ENCODE measurements at regions of chr6 and their contacts with region 1.

Region 1: DNA sequence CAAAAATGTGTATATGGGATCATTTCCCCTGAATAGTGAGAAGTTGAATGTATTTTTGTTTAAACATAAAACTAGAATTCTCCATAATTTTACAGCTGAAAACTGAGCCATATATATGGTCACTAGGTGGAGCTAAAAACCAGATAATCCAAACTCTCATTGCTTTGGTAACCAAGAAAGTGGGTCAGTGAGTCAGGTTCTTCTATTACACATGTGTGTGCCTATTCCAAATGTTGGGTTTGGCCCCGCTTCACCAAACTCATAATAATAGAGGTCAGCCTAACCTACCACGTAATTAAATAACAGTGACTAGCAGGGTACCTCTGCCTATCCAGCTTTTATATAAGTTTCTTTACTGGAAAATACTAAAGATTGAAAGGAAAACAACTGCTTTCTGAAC is 19.3 kb upstream of the RNGTT start:
- DNase-seq: no peak
- ATAC-seq: peak; percentile 80
- H3K4me3 Mint-ChIP-seq: no peak overlapping the region
- H3K27ac Mint-ChIP-seq: no peak overlapping the region
- H3K4me1 Mint-ChIP-seq: no peaks in the 10 kb centered on the region
- H3K27me3 Mint-ChIP-seq: peaks cover 3% of the 10 kb centered on the region

Region 2: DNA sequence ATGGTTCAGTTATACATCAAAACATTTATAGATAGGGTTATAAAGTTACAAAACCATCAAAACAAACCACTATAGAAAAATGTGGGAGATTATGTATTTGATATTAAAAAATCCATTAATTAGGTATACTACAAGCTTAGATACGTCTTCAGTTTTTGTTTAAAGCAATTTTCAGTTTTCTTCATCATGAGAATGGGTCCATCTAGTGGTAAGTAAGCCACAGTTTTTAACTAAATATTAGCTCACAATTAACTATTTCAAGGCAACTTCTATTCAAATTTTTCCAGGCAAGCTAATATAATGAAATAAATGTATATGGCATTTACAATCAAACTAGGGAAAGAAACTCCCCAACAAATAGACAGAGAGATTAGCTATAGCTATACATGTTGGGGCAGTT is 63.7 kb before region 1 on chr6:
- CTCF ChIA-PET with region 1: no interaction called
- DNase-seq: no peak
- ATAC-seq: no peak
- H3K4me3 Mint-ChIP-seq: no peak overlapping the region
- H3K27ac Mint-ChIP-seq: no peak overlapping the region
- H3K4me1 Mint-ChIP-seq: peaks cover 8% of the 10 kb centered on the region
- H3K27me3 Mint-ChIP-seq: no peaks in the 10 kb centered on the region

Region 3: DNA sequence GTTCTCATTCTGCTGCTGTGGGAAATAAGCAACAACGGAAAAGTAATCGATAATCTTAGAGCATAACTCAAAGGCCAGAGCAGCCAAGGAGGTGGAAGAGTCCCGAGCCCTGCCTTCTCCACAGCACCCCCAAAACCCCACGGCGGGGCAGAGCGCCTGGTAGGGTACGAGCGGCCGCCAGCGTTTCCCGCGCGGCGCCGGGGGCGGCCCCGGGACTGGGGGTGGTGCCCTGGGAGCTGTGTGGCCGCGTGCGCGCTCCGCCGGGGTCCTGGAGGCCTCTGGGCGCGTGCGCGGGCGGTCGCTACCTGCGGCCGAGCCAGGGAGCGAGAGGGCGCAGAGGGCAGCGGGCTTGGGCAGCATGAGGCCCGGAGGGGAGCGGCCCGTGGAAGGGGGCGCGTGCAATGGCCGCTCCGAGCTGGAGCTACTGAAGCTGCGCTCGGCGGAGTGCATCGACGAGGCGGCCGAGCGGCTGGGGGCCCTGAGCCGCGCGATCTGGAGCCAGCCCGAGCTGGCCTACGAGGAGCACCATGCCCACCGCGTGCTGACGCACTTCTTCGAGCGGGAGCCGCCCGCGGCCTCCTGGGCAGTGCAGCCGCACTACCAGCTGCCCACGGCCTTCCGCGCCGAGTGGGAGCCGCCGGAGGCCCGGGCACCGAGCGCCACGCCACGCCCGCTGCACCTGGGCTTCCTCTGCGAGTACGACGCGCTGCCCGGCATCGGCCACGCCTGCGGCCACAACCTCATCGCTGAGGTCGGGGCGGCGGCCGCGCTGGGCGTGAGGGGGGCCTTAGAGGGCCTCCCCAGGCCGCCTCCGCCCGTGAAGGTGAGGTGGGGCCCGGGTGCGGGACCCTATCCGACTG is 163.3 kb after region 1 on chr6 and contains the start of gene PM20D2:
- CTCF ChIA-PET with region 1: interaction called, 23 read pairs
- DNase-seq: peak; percentile 78
- ATAC-seq: peak; percentile 85
- H3K4me3 Mint-ChIP-seq: peak within 1 kb of the TSS; percentile 84
- H3K27ac Mint-ChIP-seq: peak within 1 kb of the TSS; percentile 97
- H3K4me1 Mint-ChIP-seq: peaks cover 37% of the 10 kb centered on the region
- H3K27me3 Mint-ChIP-seq: peaks cover 10% of the 10 kb centered on the region
- total RNA-seq, gene PM20D2: 13.1 to 16.6 TPM

Region 4: GRCh38 chr6:89161326-89162046 is 178.8 kb after region 1 on chr6:
- CTCF ChIA-PET with region 1: interaction called, 11 read pairs
- DNase-seq: no peak
- ATAC-seq: no peak
- H3K4me3 Mint-ChIP-seq: no peak overlapping the region
- H3K27ac Mint-ChIP-seq: no peak overlapping the region
- H3K4me1 Mint-ChIP-seq: no peaks in the 10 kb centered on the region
- H3K27me3 Mint-ChIP-seq: no peaks in the 10 kb centered on the region

Region 5: GRCh38 chr6:89242574-89243330 is 260.0 kb after region 1 on chr6:
- CTCF ChIA-PET with region 1: interaction called, 19 read pairs
- DNase-seq: no peak
- ATAC-seq: peak; percentile 39
- H3K4me3 Mint-ChIP-seq: no peak overlapping the region
- H3K27ac Mint-ChIP-seq: no peak overlapping the region
- H3K4me1 Mint-ChIP-seq: peaks cover 16% of the 10 kb centered on the region
- H3K27me3 Mint-ChIP-seq: peaks cover 34% of the 10 kb centered on the region

Measured in activated CD8-positive, alpha-beta memory T cell treated with anti-CD3 and anti-CD28 coated beads, Interleukin-2, amount 10 ng/mL, durations not matched to agents 7 days and 5 days (primary cell).